Heart left ventricle (tissue), 16 donors: ENCODE measurements at regions of chr12 and their contacts with region 1.

Region 1: DNA sequence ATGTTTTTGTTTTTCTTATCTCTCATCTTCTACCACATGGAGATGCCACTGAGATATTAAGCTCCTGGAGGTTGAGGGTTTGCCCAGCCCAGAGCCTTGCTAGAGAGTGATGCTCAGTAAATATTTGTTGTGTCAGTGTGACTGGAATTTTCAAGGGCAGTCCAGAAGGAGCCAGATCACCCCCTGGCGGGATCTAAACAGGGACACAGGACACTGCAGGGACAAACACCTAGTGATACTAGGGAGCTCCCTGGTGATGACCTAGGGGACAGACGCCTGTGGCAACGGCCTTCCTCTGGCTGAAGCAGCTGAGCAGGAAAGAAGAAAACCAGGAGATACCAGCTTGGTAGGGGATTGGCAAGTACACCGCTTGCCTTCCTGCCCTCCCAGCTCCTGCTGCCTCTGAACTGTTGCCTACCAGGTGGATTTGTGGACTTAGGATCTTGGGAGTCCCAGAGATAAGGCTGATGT is 714.4 kb upstream of the TBX3 start:
- DNase-seq: no peak
- ATAC-seq: peak in 3 of 4 donors; percentile 46 to 60 (median 58)
- H3K4me3 ChIP-seq: no peak overlapping the region
- H3K27ac ChIP-seq: no peak overlapping the region
- H3K4me1 ChIP-seq: no peaks in the 10 kb centered on the region
- H3K27me3 ChIP-seq: no peaks in the 10 kb centered on the region
- CTCF ChIP-seq: peak in 6 of 12 donors; percentile 8 to 39 (median 20)
- POLR2A ChIP-seq: no peak

Region 2: GRCh38 chr12:115172521-115172920 is 225.8 kb before region 1 on chr12:
- intact Hi-C with region 1: loop called in 1 of 10 experiments (anchors 10 kb)
- DNase-seq: no peak
- ATAC-seq: no peak
- H3K4me3 ChIP-seq: no peak overlapping the region
- H3K27ac ChIP-seq: no peak overlapping the region
- H3K4me1 ChIP-seq: peaks cover 0 to 8% (median 0%) of the 10 kb centered on the region in 12 donors
- H3K27me3 ChIP-seq: no peaks in the 10 kb centered on the region
- CTCF ChIP-seq: no peak
- POLR2A ChIP-seq: no peak

Region 3: GRCh38 chr12:115354007-115354452 is 44.3 kb before region 1 on chr12:
- intact Hi-C with region 1: no loop called
- DNase-seq: peak in 4 of 5 donors; percentile 22 to 69 (median 40)
- ATAC-seq: peak; percentile 69 to 96 (median 88)
- H3K4me3 ChIP-seq: peak overlapping the region in 9 of 12 donors; percentile 10 to 50 (median 36)
- H3K27ac ChIP-seq: peak overlapping the region in 9 of 12 donors; percentile 27 to 80 (median 50)
- H3K4me1 ChIP-seq: peaks cover 0 to 13% (median 0%) of the 10 kb centered on the region in 12 donors
- H3K27me3 ChIP-seq: no peaks in the 10 kb centered on the region
- CTCF ChIP-seq: no peak
- POLR2A ChIP-seq: peak in 1 of 2 donors; percentile 32